Lower leg skin (tissue), 4 donors: ENCODE measurements at regions of chr13 and their contacts with region 1.

Region 1: GRCh38 chr13:75587679-75588078 is 38.1 kb downstream of the UCHL3 start:
- DNase-seq: no peak
- H3K4me3 ChIP-seq: no peak overlapping the region
- CTCF ChIP-seq: no peak
- POLR2A ChIP-seq: no peak

Region 2: DNA sequence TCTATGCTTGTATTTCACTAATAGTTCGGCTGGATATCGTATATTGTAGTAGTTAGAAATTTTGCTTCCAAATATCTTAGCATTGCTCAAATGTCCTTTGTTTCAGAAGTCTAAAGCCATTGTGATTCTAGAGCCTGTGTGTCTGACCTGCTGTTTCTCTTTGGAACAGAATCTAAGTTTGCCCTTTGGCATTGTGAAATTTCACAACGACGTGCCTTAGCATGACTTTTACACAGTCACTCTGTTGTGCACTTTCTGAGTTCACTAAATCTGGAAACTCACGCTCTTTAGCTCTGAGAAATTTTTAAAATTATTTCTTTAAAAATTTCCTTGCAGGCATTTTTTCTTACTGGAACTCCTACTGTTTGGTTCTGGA is 257.9 kb before region 1 on chr13:
- intact Hi-C with region 1: no loop called
- DNase-seq: no peak
- H3K4me3 ChIP-seq: no peak overlapping the region
- CTCF ChIP-seq: no peak
- POLR2A ChIP-seq: no peak

Region 3: GRCh38 chr13:75566658-75567057 is 21.0 kb before region 1 on chr13:
- intact Hi-C with region 1: loop called (anchors 1 kb)
- DNase-seq: no peak
- H3K4me3 ChIP-seq: no peak overlapping the region
- CTCF ChIP-seq: no peak
- POLR2A ChIP-seq: no peak